Heart left ventricle (tissue), 16 donors: ENCODE measurements at regions of chr16 and their contacts with region 1.

Region 1: GRCh38 chr16:64478252-64478906 is 643.5 kb downstream of the CDH11 start:
- DNase-seq: no peak
- ATAC-seq: peak in 3 of 4 donors; percentile 5 to 33 (median 25)
- H3K4me3 ChIP-seq: no peak overlapping the region
- H3K27ac ChIP-seq: peak overlapping the region in 1 of 12 donors; percentile 24
- H3K4me1 ChIP-seq: peaks cover 0 to 23% (median 5%) of the 10 kb centered on the region in 12 donors
- H3K27me3 ChIP-seq: no peaks in the 10 kb centered on the region
- CTCF ChIP-seq: no peak
- POLR2A ChIP-seq: no peak

Region 2: DNA sequence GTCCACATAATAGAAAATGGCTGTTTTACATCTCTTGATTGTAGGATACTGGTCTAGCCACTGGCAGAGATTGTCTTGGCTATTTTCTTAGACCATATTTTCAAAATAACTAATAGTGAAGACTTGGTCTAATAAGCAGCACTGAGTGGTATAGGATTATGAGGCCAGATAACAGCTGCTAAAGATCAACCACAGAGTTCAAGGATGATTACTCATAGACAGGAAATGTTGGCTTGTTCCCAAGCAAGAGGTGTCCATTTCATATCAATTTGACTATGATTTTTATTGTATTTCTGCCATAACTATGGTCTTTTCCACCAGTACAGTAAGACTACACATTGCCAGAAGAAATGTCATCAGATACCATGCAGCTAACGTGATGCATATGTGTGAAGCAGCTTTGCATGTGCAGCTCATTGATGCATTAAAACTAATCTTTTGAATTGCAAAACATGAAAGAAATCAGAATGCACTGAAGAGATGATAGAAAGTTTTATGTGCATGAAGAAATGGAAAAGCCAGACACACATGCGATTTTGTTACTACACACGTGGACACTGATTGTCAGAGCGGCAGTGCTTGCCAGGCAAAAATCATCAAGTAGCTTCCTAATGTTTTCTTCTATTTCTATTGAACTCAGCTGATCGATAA is 49.8 kb before region 1 on chr16:
- intact Hi-C with region 1: loop called in 1 of 10 experiments (anchors 5 kb)
- DNase-seq: no peak
- ATAC-seq: no peak
- H3K4me3 ChIP-seq: no peak overlapping the region
- H3K27ac ChIP-seq: no peak overlapping the region
- H3K4me1 ChIP-seq: no peaks in the 10 kb centered on the region
- H3K27me3 ChIP-seq: no peaks in the 10 kb centered on the region
- CTCF ChIP-seq: no peak
- POLR2A ChIP-seq: no peak